ENCODE measurements at regions of chr11 and their contacts with region 1.

Region 1: DNA sequence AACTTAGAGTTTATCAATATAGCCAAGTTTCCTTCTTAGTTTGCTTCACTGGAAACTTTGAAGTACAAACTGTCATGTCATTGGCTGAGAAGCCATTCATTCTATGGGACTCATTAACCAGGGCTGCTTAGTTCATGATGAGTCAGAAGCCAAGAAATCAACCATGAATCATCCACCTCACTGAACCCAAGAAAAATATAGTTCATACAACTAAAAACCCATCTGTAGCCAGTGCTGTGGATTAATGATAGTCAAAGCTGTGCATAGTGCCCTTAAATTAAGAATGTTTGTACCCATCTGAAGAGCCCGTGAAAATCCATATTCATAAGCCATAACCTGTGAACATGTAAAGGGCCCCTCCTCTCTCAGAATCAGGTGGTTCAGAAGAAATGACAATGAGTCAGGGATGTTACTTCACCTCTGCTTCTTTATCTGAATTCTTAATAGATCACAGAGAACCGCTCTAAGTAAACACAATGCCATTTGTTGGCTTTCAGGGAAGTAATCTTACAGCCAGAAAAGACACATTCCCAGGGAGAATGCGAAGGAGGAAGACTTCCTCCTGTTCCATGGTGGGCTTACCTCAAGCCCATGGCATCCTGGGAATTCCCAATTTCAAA is 25.4 kb downstream of the MMP20 start:
- DNase-seq: peak; percentile 62
- H3K4me3 Mint-ChIP-seq: peak overlapping the region; percentile 39
- H3K27ac Mint-ChIP-seq: peak overlapping the region; percentile 84
- H3K4me1 Mint-ChIP-seq: peaks cover 33% of the 10 kb centered on the region
- H3K27me3 Mint-ChIP-seq: no peaks in the 10 kb centered on the region

Region 2: DNA sequence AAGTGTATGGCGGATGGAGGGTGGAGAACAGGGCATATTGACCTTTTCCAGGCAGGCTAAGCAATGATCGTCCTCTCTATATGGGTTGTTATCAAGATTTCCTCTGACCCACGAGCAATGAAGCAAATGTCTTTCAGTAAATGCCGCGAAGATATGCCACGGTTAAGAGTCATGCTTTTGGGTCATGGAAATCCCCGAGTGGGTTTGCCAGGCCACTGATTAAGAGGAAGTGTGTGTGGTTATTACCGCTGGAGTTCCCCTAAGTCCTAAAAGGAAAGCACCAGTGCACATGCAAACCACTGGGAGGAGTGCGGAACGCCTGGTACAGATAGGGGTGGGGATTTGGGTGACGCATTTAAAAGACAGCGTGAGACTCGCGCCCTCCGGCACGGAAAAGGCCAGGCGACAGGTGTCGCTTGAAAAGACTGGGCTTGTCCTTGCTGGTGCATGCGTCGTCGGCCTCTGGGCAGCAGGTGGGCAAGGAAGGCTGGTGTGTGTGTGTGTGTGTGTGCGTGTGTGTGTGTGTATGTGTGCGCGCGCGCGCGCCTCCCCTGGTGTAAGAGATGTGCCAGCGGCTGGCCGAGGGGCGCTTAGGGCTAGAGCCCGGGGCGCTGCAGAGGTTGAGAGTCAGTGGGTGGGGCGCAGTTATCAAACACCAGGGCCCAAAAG is 282.5 kb before region 1 on chr11 and contains the start of gene BIRC3:
- intact Hi-C with region 1: loop called (anchors 1 kb)
- DNase-seq: peak; percentile 97
- H3K4me3 Mint-ChIP-seq: peak within 1 kb of the TSS; percentile 91
- H3K27ac Mint-ChIP-seq: peak within 1 kb of the TSS; percentile 93
- H3K4me1 Mint-ChIP-seq: peaks cover 64% of the 10 kb centered on the region
- H3K27me3 Mint-ChIP-seq: peaks cover 2% of the 10 kb centered on the region
- total RNA-seq, gene BIRC3: 100 and 102 TPM in 2 replicates

Region 3: DNA sequence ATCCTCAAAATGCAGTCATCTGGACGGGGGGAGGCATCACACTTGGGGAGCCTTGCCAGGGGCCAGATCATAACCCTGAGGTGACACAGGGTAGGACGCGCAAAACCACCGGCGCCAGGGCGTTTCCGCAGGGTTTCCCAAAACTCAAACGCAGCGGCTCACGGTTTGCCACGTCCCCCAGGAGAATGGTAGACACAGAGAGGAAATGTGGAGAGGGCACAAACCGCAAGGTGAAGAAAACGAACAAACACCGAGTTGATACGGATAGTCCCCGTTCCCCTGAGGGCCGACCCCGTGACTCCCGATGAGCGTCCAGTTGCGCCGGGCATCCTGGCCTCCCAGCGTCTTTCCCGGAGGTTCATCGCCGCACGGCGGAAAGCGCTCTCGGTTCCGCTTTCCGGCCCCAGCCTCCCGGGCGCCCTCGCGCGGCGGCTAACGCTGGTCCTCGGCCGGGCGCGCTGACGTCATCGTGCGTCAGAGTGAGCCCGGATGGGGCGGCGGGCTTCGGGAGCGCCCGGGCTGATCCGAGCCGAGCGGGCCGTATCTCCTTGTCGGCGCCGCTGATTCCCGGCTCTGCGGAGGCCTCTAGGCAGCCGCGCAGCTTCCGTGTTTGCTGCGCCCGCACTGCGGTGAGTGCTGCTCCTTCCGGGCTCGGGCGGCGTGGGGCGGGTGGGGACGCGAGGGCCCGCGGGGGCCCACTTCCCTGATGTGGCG is 252.8 kb before region 1 on chr11 and contains the start of gene BIRC2:
- intact Hi-C with region 1: loop called (anchors 1 kb)
- DNase-seq: peak; percentile 99
- H3K4me3 Mint-ChIP-seq: peak within 1 kb of the TSS; percentile 99
- H3K27ac Mint-ChIP-seq: peak within 1 kb of the TSS; percentile 99
- H3K4me1 Mint-ChIP-seq: peaks cover 36% of the 10 kb centered on the region
- H3K27me3 Mint-ChIP-seq: no peaks in the 10 kb centered on the region
- total RNA-seq, gene BIRC2: 27.8 and 30.8 TPM in 2 replicates

Region 4: DNA sequence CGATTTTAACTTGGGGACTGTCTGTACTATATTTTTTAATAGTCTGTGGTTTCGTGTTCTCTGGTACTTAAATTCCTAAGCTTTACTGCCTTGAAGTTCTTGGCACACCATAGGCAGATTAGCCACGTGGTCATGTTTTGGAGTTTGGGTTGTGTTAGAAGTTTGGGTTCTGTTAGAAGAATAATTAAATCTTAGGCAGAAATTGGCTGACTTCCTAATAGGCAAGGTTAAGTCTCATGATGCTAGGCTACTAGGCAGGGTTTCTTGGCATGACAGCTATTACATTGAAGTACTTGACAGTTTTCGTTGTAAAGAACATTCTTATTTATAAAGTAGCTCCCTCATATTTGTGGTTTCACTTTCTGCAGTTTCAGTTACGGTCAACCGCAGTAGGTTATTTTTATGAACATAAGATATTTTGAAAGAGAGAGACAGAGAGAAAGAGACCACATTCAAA is 39.2 kb before region 1 on chr11:
- intact Hi-C with region 1: loop called (anchors 1 kb)
- DNase-seq: peak; percentile 73
- H3K4me3 Mint-ChIP-seq: peak overlapping the region; percentile 52
- H3K27ac Mint-ChIP-seq: peak overlapping the region; percentile 78
- H3K4me1 Mint-ChIP-seq: peaks cover 39% of the 10 kb centered on the region
- H3K27me3 Mint-ChIP-seq: peaks cover 2% of the 10 kb centered on the region

Region 5: GRCh38 chr11:102577182-102577581 is 22.6 kb before region 1 on chr11:
- intact Hi-C with region 1: loop called (anchors 1 kb)
- DNase-seq: no peak
- H3K4me3 Mint-ChIP-seq: no peak overlapping the region
- H3K27ac Mint-ChIP-seq: no peak overlapping the region
- H3K4me1 Mint-ChIP-seq: peaks cover 35% of the 10 kb centered on the region
- H3K27me3 Mint-ChIP-seq: no peaks in the 10 kb centered on the region

Region 6: GRCh38 chr11:102589047-102589459 is 10.7 kb before region 1 on chr11:
- intact Hi-C with region 1: loop called (anchors 1 kb)
- DNase-seq: peak; percentile 67
- H3K4me3 Mint-ChIP-seq: peak overlapping the region; percentile 0
- H3K27ac Mint-ChIP-seq: peak overlapping the region; percentile 42
- H3K4me1 Mint-ChIP-seq: peaks cover 26% of the 10 kb centered on the region
- H3K27me3 Mint-ChIP-seq: no peaks in the 10 kb centered on the region

Region 7: GRCh38 chr11:102630598-102631448 is 31.1 kb after region 1 on chr11:
- intact Hi-C with region 1: no loop called
- DNase-seq: no peak
- H3K4me3 Mint-ChIP-seq: no peak overlapping the region
- H3K27ac Mint-ChIP-seq: no peak overlapping the region
- H3K4me1 Mint-ChIP-seq: no peaks in the 10 kb centered on the region
- H3K27me3 Mint-ChIP-seq: peaks cover 31% of the 10 kb centered on the region

Region 8: GRCh38 chr11:102653744-102654291 is 54.1 kb after region 1 on chr11:
- intact Hi-C with region 1: no loop called
- DNase-seq: no peak
- H3K4me3 Mint-ChIP-seq: no peak overlapping the region
- H3K27ac Mint-ChIP-seq: no peak overlapping the region
- H3K4me1 Mint-ChIP-seq: no peaks in the 10 kb centered on the region
- H3K27me3 Mint-ChIP-seq: peaks cover 22% of the 10 kb centered on the region

Measured in activated CD4-positive, alpha-beta T cell treated with anti-CD3 and anti-CD28 coated beads, Interleukin-2, amount 10 ng/mL, durations not matched to agents 24 days and 14 days (primary cell).